Activated naive CD4-positive, alpha-beta T cell treated with anti-CD3 and anti-CD28 coated beads, Interleukin-2, amount 10 ng/mL, durations not matched to agents 7 days and 5 days (primary cell): ENCODE measurements at regions of chr4 and their contacts with region 1.

Region 1: DNA sequence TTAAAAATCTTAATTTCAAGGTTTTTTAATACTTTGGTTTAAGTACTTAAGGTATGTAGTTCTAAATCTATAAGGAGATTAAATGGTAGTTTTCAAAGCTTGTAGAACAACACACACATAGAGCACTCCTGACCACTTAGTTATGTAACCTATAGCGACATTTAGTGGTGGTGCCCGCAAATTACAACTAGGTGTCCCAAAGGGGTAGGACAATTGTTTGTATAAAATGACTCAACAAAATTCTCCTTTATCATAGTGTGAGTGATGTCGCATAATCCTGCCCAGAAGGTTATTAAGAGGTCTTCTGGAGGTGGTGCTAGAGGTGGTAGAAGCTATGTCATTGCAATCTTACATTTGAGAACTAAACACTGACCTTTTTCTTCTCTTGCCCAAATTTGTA is 373.0 kb upstream of the RASGEF1B start:
- DNase-seq: peak; percentile 82
- H3K4me3 Mint-ChIP-seq: no peak overlapping the region
- H3K27ac Mint-ChIP-seq: no peak overlapping the region
- H3K4me1 Mint-ChIP-seq: no peaks in the 10 kb centered on the region
- H3K27me3 Mint-ChIP-seq: no peaks in the 10 kb centered on the region

Region 2: DNA sequence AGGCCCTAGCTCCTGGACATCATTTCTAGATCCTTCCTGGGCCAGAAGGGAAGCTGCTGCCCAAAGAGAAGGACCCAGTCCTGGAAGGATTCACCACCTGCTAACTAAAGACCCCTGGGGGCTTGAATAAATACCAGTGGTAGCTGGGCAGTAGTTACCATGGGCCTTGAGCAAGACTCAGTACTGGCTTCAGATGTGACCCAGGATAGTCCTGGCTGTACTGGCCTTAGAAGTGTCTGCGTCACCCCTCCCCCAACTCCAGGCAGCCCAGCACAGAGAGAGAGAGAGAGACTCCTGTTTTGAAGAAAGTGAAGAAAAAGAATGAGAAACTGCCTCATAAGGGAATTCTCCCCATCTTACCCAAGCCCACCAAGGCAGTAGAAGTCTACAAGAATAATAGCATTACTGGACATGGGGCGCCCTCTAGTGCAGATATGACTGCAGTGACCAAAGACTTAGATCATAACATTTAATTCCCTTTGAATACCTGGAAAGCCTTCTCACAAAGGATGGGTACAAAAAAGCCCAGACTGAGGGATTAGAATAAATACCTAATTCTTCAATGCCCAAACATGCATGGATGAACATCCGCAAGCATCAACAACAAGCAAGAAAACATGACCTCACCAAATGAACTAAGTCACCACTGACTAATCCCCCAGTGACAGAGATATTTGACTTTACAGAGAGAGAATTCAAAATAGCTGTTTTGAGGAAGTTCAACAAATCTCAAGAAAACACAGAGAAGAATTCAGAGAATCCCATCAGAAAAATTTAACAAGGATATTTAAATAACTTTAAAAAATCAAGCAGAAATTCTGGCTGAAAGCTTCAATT is 357.3 kb after region 1 on chr4:
- CTCF ChIA-PET with region 1: interaction called, 11 read pairs
- DNase-seq: peak; percentile 68
- H3K4me3 Mint-ChIP-seq: no peak overlapping the region
- H3K27ac Mint-ChIP-seq: no peak overlapping the region
- H3K4me1 Mint-ChIP-seq: no peaks in the 10 kb centered on the region
- H3K27me3 Mint-ChIP-seq: peaks cover 16% of the 10 kb centered on the region